ENCODE measurements at regions of chr7 and their contacts with region 1.

Region 1: DNA sequence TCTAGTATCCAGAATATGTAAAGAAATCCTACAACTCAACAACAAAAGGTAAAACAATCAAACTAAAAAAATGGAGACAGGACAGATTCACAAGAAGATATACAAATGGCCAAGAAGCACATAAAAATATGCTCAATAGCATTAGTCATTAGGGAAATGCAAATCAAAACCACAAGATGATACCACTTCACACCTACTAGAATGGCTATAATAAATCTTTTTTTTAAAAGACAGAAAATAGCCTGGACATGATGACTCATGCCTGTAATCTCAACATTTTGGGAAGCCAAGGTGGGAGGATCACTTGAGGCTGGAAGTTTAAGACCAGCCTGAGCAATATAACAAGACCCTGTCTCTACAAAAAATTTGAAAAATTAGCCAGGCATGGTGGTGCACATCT is 27.9 kb upstream of the CHCHD3 start:
- DNase-seq: no peak
- H3K4me3 ChIP-seq: no peak overlapping the region
- H3K27ac ChIP-seq: no peak overlapping the region
- H3K4me1 ChIP-seq: no peaks in the 10 kb centered on the region
- H3K27me3 ChIP-seq: peaks cover 0 to 12% of the 10 kb centered on the region in 2 donors
- CTCF ChIP-seq: no peak

Region 2: GRCh38 chr7:133196856-133197612 is 87.2 kb after region 1 on chr7:
- intact Hi-C with region 1: loop called (anchors 5 kb)
- DNase-seq: no peak
- H3K4me3 ChIP-seq: no peak overlapping the region
- H3K27ac ChIP-seq: no peak overlapping the region
- H3K4me1 ChIP-seq: no peaks in the 10 kb centered on the region
- H3K27me3 ChIP-seq: peaks cover 0 to 3% of the 10 kb centered on the region in 2 donors
- CTCF ChIP-seq: no peak

Region 3: DNA sequence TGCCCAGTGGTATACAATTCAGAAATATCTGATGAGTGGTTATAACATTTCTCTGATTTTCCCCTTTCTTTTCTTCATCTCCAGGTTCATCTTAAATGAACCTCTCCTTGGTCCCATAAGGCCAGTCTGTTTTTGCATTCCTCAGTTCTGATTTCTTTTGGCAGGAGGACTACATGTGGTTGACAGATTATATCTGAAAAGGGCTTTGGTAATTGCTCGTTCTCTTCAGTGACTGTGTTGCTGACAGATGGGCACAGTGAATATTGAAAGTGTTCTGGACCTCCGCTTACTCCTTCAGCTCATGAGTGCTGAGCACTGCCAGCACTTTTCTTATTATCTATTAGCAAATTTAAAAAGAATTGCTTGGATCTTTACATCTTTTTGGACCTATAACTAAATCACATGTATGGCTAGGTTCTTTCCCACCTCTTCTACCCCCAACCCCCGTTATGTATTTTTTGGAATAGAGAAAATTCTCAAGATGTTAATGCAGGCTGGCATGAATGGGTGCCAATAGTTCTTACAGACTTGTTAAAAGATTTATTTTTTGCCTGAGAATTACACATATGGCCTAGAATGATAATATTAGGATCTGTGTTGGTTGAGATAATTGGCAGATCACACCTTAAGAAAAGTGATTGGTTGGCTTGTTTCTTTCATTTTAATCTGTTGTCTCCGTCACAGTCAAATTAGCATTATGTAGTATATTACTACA is 466.1 kb after region 1 on chr7:
- intact Hi-C with region 1: no loop called
- DNase-seq: no peak
- H3K4me3 ChIP-seq: no peak overlapping the region
- H3K27ac ChIP-seq: no peak overlapping the region
- H3K4me1 ChIP-seq: no peaks in the 10 kb centered on the region
- H3K27me3 ChIP-seq: no peaks in the 10 kb centered on the region
- CTCF ChIP-seq: no peak